ENCODE measurements at regions of chr5 and their contacts with region 1.

Region 1: DNA sequence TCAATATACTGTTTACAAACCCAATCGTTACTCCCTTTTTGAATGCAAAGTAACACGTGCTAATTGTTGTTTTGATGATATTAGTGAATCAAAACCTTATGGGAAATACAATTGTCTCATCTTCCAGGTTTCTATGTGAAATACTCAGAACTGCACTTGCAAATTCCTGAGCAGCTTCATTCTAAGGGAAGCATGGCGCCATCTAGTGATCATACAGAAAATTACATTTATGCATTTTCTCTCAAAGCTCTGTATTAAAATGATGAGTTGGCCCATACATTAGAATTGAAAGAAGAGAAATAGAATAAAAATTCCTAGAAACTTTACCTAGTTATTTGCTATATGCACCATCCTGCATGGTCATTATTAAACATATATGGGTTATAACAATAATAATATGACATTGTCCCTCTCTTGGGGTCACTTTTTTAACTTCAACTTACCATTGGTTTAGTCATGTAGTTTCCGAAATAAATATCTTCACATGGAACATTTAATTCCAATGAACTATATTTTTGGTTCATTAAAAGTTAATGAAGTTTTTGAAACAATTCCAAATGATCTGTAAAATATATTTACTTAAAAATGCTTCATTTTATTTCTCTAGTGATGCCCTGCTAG is 220.0 kb downstream of the PDE4D start:
- DNase-seq: peak; percentile 16
- ATAC-seq: no peak
- H3K4me3 ChIP-seq: no peak overlapping the region
- H3K27ac ChIP-seq: no peak overlapping the region
- H3K4me1 ChIP-seq: no peaks in the 10 kb centered on the region
- H3K27me3 ChIP-seq: no peaks in the 10 kb centered on the region; a peak in 1 of 5 replicates
- CTCF ChIP-seq: peak; percentile 59
- EP300 ChIP-seq: no peak
- POLR2A ChIP-seq: no peak
- RAD21 ChIP-seq: no peak

Region 2: DNA sequence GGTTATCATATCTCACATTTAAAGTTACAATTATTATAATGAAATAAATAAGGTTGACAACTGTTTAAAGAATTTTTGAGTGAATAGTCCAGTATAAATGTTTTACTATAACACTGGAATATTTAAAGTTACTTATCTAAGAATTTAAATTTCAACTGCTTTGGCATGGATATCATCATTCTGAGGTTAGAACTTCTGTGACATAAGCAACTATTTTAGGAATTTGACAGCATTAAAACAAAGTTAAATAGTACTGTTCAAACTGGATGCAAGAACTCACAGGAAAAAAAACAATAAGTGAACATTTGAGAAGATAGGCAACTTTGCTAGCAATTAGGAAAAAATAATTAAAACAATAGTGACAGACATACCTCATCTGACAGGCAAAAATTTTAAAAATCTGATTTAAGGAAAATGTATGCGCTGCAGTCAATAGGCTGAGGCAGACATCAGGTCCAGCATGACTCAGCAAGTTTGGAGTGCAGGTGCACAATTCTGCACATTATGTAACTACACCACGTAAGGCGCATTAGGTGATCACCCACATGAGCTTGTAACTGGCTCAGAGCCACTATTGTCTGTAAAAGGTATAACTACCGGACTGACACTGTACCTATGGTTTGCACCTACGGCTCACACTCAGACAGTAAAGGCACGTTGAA is 39.4 kb after region 1 on chr5:
- CTCF ChIA-PET with region 1: no interaction called
- POLR2A ChIA-PET with region 1: no interaction called
- in situ Hi-C with region 1: no loop called
- intact Hi-C with region 1: no loop called
- DNase-seq: no peak
- ATAC-seq: no peak
- H3K4me3 ChIP-seq: no peak overlapping the region
- H3K27ac ChIP-seq: no peak overlapping the region
- H3K4me1 ChIP-seq: no peaks in the 10 kb centered on the region
- H3K27me3 ChIP-seq: no peaks in the 10 kb centered on the region
- CTCF ChIP-seq: no peak
- EP300 ChIP-seq: no peak
- POLR2A ChIP-seq: no peak
- RAD21 ChIP-seq: no peak

Region 3: DNA sequence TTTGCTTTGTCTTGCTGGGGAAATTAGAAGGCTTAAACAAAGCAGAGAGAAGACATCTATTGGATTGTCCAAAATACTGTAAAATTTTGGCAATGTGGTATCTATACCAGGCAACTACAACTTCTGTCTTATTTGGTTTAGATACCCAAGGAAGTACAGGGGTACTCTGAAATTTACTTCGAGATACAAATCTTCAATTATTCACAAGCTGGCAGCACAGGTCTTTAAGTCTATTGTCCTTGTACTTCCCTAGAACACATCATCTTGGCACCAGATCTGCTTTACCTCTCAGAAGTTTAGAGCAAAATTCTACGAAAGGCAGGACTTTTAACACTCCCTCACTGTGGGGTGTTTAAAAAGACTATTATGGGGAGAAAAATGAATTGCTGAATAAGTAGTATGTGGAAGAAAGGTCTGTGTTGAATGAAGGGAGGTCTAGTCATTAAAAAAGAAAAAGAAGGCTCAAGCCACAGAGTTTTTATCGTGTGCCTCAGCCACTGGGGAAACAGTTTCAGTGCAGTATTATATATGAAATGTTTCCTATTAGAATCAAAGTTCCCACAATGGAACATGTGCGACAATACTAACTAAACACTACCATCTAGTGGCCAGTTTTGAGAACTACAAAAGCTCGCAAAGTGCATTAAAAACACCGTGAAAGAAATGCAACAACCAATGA is 126.3 kb after region 1 on chr5:
- CTCF ChIA-PET with region 1: no interaction called
- POLR2A ChIA-PET with region 1: no interaction called
- in situ Hi-C with region 1: no loop called
- intact Hi-C with region 1: loop called (anchors 5 kb)
- DNase-seq: peak; percentile 7
- ATAC-seq: no peak
- H3K4me3 ChIP-seq: no peak overlapping the region
- H3K27ac ChIP-seq: no peak overlapping the region
- H3K4me1 ChIP-seq: no peaks in the 10 kb centered on the region
- H3K27me3 ChIP-seq: no peaks in the 10 kb centered on the region
- CTCF ChIP-seq: peak; percentile 61
- EP300 ChIP-seq: no peak
- POLR2A ChIP-seq: no peak
- RAD21 ChIP-seq: no peak

Measured in HepG2 (cell line).